B cell (primary cell): ENCODE measurements at regions of chr17 and their contacts with region 1.

Region 1: GRCh38 chr17:4966844-4967538 is 626 bp downstream of the SPAG7 start:
- DNase-seq: peak; percentile 99
- ATAC-seq: peak; percentile 85
- H3K4me3 ChIP-seq: peak overlapping the region; percentile 68 to 92 (median 84)
- H3K4me3 Mint-ChIP-seq: no peak overlapping the region
- H3K27ac ChIP-seq: peak overlapping the region; percentile 67 to 68
- H3K27ac Mint-ChIP-seq: no peak overlapping the region
- H3K4me1 ChIP-seq: peaks cover 17 to 22% of the 10 kb centered on the region in 2 donors
- H3K4me1 Mint-ChIP-seq: peaks cover 15% of the 10 kb centered on the region
- H3K27me3 ChIP-seq: no peaks in the 10 kb centered on the region
- H3K27me3 Mint-ChIP-seq: no peaks in the 10 kb centered on the region
- CTCF ChIP-seq: no peak

Region 2: DNA sequence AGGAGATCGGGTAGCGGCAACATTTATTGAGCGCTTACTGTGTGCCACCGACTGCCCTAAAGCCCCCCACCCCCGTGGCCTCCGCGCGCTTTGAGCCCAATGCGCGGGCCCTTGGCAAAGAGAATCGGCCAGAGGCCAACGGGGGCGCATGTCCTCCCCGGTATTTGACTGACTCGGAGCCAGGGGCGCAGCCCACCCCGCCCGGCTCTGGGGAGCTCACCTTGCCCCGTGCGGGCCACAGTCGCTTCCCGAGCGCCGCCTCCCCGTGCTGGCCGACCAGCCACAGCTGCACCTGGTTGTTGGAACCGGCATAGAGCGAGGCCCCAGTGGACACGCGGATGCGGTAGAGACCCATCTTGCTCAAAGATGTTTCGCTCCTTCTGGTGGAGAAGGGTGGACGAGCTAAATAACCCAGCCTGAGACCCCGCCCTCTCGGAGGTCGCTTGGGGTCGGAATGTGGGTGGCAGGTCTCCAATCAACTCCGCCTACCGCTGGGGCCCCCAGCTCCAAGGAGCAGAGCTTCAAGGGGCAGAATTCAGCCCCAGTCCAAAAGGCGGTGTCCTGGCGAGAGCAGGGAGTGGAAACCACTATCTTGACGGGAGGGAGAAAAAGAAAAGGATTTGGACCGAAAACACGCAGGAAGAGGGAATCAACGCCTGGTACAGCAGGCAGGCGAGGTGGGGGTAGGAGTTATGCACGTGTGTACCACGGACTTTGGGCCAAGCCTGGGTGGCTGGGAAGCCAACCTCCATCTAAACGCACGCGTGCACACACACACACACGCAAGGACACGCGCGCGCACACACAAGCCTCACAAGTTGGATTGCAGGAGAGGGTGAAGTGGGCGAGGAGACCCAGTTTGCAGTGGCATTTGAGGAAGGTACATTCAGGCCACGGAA is 325.4 kb before region 1 on chr17 and contains the start of gene ALOX15:
- CTCF ChIA-PET with region 1: no interaction called
- POLR2A ChIA-PET with region 1: no interaction called
- intact Hi-C with region 1: no loop called
- DNase-seq: peak; percentile 38
- ATAC-seq: no peak
- H3K4me3 ChIP-seq: no peak within 1 kb of the TSS
- H3K4me3 Mint-ChIP-seq: no peak within 1 kb of the TSS
- H3K27ac ChIP-seq: no peak within 1 kb of the TSS
- H3K27ac Mint-ChIP-seq: peak within 1 kb of the TSS; percentile 11
- H3K4me1 ChIP-seq: peaks cover 28 to 32% of the 10 kb centered on the region in 2 donors
- H3K4me1 Mint-ChIP-seq: peaks cover 27% of the 10 kb centered on the region
- H3K27me3 ChIP-seq: peaks cover 0 to 54% (median 19%) of the 10 kb centered on the region in 4 experiments
- H3K27me3 Mint-ChIP-seq: peaks cover 50% of the 10 kb centered on the region
- CTCF ChIP-seq: no peak
- total RNA-seq, gene ALOX15: not detected in 2 replicates

Region 3: GRCh38 chr17:4678427-4679026 is 288.5 kb before region 1 on chr17:
- CTCF ChIA-PET with region 1: no interaction called
- POLR2A ChIA-PET with region 1: no interaction called
- intact Hi-C with region 1: no loop called
- DNase-seq: no peak
- ATAC-seq: no peak
- H3K4me3 ChIP-seq: no peak overlapping the region
- H3K4me3 Mint-ChIP-seq: no peak overlapping the region
- H3K27ac ChIP-seq: no peak overlapping the region
- H3K27ac Mint-ChIP-seq: no peak overlapping the region
- H3K4me1 ChIP-seq: no peaks in the 10 kb centered on the region
- H3K4me1 Mint-ChIP-seq: no peaks in the 10 kb centered on the region
- H3K27me3 ChIP-seq: no peaks in the 10 kb centered on the region
- H3K27me3 Mint-ChIP-seq: no peaks in the 10 kb centered on the region
- CTCF ChIP-seq: no peak

Region 4: GRCh38 chr17:4733073-4733531 is 233.9 kb before region 1 on chr17:
- CTCF ChIA-PET with region 1: no interaction called
- POLR2A ChIA-PET with region 1: no interaction called
- intact Hi-C with region 1: loop called (anchors 1 kb)
- DNase-seq: peak; percentile 89
- ATAC-seq: peak; percentile 59
- H3K4me3 ChIP-seq: no peak overlapping the region
- H3K4me3 Mint-ChIP-seq: peak overlapping the region; percentile 65
- H3K27ac ChIP-seq: peak overlapping the region; percentile 66 to 68
- H3K27ac Mint-ChIP-seq: peak overlapping the region; percentile 93
- H3K4me1 ChIP-seq: peaks cover 33 to 47% of the 10 kb centered on the region in 2 donors
- H3K4me1 Mint-ChIP-seq: peaks cover 49% of the 10 kb centered on the region
- H3K27me3 ChIP-seq: no peaks in the 10 kb centered on the region
- H3K27me3 Mint-ChIP-seq: no peaks in the 10 kb centered on the region
- CTCF ChIP-seq: peak; percentile 76

Region 5: DNA sequence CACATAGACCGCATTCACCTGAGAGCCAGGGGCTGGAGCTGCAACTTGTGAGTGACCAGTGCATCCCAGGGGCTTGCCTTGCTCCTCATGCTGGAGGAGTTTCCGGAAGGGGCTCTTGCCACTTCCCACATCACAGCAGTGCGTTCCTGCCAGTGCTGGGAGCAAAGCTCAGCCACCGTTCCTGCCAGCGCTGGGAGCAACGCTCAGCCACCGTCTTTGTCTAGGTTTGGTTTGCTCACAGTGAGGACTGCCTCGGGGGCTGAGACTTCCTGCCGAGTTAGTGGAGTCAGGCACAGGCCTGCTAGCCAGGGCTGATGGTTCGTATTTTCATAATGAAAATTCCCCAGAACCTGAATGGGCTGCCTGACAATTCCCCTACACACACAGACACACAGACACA is 58.7 kb before region 1 on chr17:
- CTCF ChIA-PET with region 1: interaction called, 32 read pairs
- POLR2A ChIA-PET with region 1: interaction called, 6 read pairs
- intact Hi-C with region 1: loop called (anchors 1 kb)
- DNase-seq: no peak
- ATAC-seq: no peak
- H3K4me3 ChIP-seq: no peak overlapping the region
- H3K4me3 Mint-ChIP-seq: no peak overlapping the region
- H3K27ac ChIP-seq: no peak overlapping the region
- H3K27ac Mint-ChIP-seq: no peak overlapping the region
- H3K4me1 ChIP-seq: peaks cover 6 to 15% of the 10 kb centered on the region in 2 donors
- H3K4me1 Mint-ChIP-seq: peaks cover 4% of the 10 kb centered on the region
- H3K27me3 ChIP-seq: peaks cover 0 to 11% (median 1%) of the 10 kb centered on the region in 4 experiments
- H3K27me3 Mint-ChIP-seq: peaks cover 12% of the 10 kb centered on the region
- CTCF ChIP-seq: no peak

Region 6: GRCh38 chr17:4980644-4981216 is 13.7 kb after region 1 on chr17:
- CTCF ChIA-PET with region 1: interaction called, 19 read pairs
- POLR2A ChIA-PET with region 1: interaction called, 4 read pairs
- intact Hi-C with region 1: loop called (anchors 1 kb)
- DNase-seq: peak; percentile 66
- ATAC-seq: peak; percentile 75
- H3K4me3 ChIP-seq: no peak overlapping the region
- H3K4me3 Mint-ChIP-seq: peak overlapping the region; percentile 29
- H3K27ac ChIP-seq: no peak overlapping the region
- H3K27ac Mint-ChIP-seq: peak overlapping the region; percentile 87
- H3K4me1 ChIP-seq: peaks cover 18 to 35% of the 10 kb centered on the region in 2 donors
- H3K4me1 Mint-ChIP-seq: peaks cover 41% of the 10 kb centered on the region
- H3K27me3 ChIP-seq: no peaks in the 10 kb centered on the region
- H3K27me3 Mint-ChIP-seq: no peaks in the 10 kb centered on the region
- CTCF ChIP-seq: peak; percentile 77

Region 7: GRCh38 chr17:5019475-5019956 is 52.5 kb after region 1 on chr17:
- CTCF ChIA-PET with region 1: interaction called, 3 read pairs
- POLR2A ChIA-PET with region 1: interaction called, 13 read pairs
- intact Hi-C with region 1: loop called (anchors 5 kb)
- DNase-seq: peak; percentile 62
- ATAC-seq: peak; percentile 52
- H3K4me3 ChIP-seq: no peak overlapping the region
- H3K4me3 Mint-ChIP-seq: no peak overlapping the region
- H3K27ac ChIP-seq: no peak overlapping the region
- H3K27ac Mint-ChIP-seq: peak overlapping the region; percentile 50
- H3K4me1 ChIP-seq: peaks cover 6 to 14% of the 10 kb centered on the region in 2 donors
- H3K4me1 Mint-ChIP-seq: peaks cover 13% of the 10 kb centered on the region
- H3K27me3 ChIP-seq: peaks cover 0 to 32% (median 1%) of the 10 kb centered on the region in 4 experiments
- H3K27me3 Mint-ChIP-seq: no peaks in the 10 kb centered on the region
- CTCF ChIP-seq: no peak

Region 8: DNA sequence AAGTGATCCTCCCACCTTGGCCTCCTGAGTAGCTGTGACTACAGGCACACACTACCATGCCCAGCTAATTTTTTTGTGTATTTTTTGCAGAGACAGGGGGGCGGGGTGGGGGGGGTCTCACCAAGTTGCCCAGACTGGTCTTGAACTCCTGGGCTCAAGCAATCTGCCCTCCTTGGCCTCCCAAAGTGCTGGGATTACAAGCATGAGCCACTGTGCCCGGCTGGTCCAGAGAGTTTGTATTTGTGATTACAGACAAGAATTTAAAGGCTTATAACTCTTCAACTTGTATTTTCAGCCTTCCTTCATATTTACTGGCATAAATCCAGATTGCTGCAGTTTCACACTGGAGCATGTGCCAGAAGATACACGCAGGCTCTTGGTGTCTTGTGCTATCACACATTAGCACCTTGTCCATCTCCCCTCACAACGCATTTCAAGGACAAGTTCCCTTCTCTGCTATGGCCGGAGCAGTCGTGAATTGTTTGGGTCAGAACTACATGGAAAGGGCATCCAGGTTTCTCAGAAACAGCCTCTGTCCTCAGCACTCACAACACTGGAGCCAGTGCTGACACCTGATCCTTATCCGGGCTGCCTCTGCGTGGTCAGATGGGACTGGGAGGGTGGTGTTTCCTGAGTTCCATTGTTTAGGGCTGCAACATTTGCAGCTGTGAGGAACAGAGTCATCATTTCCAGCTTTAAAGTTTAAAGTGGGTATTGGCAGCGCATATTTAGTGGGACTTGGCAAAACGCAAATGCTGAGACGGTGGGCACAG is 1131.2 kb after region 1 on chr17:
- CTCF ChIA-PET with region 1: no interaction called
- POLR2A ChIA-PET with region 1: no interaction called
- intact Hi-C with region 1: no loop called
- DNase-seq: no peak
- ATAC-seq: no peak
- H3K4me3 ChIP-seq: no peak overlapping the region
- H3K4me3 Mint-ChIP-seq: no peak overlapping the region
- H3K27ac ChIP-seq: no peak overlapping the region
- H3K27ac Mint-ChIP-seq: no peak overlapping the region
- H3K4me1 ChIP-seq: no peaks in the 10 kb centered on the region
- H3K4me1 Mint-ChIP-seq: no peaks in the 10 kb centered on the region
- H3K27me3 ChIP-seq: no peaks in the 10 kb centered on the region
- H3K27me3 Mint-ChIP-seq: peaks cover 4% of the 10 kb centered on the region
- CTCF ChIP-seq: no peak